ENCODE measurements at regions of chr9 and their contacts with region 1.

Region 1: GRCh38 chr9:128902351-128903078 is 18.3 kb upstream of the PHYHD1 start:
- DNase-seq: peak; percentile 92
- H3K4me3 Mint-ChIP-seq: peak overlapping the region; percentile 71
- H3K27ac Mint-ChIP-seq: peak overlapping the region; percentile 96
- H3K4me1 Mint-ChIP-seq: peaks cover 80% of the 10 kb centered on the region
- H3K27me3 Mint-ChIP-seq: no peaks in the 10 kb centered on the region

Region 2: DNA sequence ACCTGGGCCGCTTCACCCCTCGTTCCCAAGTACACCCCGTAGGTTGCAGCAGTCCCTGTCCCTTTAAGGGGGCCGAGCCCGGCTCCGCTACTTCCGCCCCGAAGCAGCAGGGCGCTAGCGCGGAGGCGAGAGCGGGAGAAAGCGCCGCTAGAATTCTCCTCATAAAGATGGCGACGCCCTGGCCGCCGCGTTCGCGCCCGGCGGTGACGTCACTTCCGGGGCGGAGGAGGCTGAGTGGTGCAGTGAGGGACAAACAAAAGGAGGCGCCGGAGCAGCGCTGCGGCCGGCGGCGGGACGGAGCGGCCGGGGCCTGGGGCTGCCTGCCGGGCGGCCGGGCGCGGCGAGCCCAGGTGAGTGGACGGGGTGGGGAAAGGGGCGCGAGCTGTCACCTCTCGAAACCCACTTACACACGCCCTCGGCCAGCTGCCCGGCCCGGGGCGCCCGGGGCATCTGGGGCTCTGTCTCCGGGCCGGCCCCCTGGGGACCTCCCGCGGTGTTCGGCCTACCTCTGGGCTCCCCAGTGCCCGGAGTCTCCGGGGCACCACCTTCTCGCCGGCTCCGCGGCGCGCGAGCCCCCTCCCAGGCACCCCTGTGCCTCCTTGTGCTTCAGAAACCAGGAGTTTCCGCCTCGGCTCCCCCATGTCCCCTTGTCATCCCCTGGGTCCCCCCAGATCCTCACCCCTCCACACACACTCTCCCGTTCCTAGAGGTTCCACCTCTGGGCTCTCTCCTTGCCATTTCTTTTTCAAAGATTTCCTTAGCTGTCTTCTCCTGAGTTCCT is 20.4 kb before region 1 on chr9 and contains the starts of genes KYAT1 and LRRC8A:
- CTCF ChIA-PET with region 1: interaction called, 3 read pairs
- POLR2A ChIA-PET with region 1: interaction called, 43 read pairs
- DNase-seq: peak; percentile 99
- H3K4me3 Mint-ChIP-seq: peak within 1 kb of the TSS; percentile 93
- H3K27ac Mint-ChIP-seq: peak within 1 kb of the TSS; percentile 89
- H3K4me1 Mint-ChIP-seq: peaks cover 64% of the 10 kb centered on the region
- H3K27me3 Mint-ChIP-seq: no peaks in the 10 kb centered on the region
- total RNA-seq, gene KYAT1: 12.7 to 14.8 TPM
- total RNA-seq, gene LRRC8A: 37.1 to 38.1 TPM

Region 3: DNA sequence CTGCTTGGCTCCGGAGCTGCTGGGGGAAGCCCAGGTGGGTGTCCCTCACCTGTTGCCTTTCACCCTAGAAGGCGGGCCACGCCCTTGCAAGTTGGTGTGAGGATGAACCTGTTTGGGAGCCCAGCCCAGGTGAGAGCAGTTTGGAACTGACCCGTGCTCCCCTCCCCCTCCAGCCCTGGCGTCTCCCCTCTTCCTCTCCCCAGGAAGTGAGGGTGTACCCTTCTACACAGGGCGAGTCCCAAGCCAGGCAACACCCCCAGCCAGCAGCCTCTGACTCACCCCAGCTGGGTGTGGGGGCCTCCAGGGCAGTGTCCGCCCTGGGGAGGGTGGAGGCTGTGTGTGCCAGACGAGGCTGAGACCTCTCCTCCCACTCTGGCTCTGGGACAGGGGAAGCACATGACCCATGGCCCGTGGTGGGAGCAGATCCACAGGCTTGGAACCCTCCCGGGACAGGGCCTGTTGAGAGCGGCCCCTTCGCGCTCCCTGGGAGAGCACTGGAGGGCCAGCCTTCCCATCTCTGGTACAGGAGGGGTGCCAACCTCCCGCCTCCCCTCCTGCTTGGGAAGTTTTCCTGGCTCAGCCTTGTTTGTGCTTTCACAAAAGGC is 10.1 kb before region 1 on chr9:
- CTCF ChIA-PET with region 1: no interaction called
- POLR2A ChIA-PET with region 1: interaction called, 13 read pairs
- DNase-seq: no peak
- H3K4me3 Mint-ChIP-seq: no peak overlapping the region
- H3K27ac Mint-ChIP-seq: peak overlapping the region; percentile 74
- H3K4me1 Mint-ChIP-seq: peaks cover 73% of the 10 kb centered on the region
- H3K27me3 Mint-ChIP-seq: no peaks in the 10 kb centered on the region

Measured in activated CD4-positive, alpha-beta memory T cell treated with anti-CD3 and anti-CD28 coated beads, Interleukin-2, amount 10 ng/mL, durations not matched to agents 7 days and 5 days (primary cell).